Endothelial cell of umbilical vein (primary cell): ENCODE measurements at regions of chr2 and their contacts with region 1.

Region 1: GRCh38 chr2:197515739-197516392 is at the start of gene MOB4:
- DNase-seq: peak; percentile 97
- H3K4me3 ChIP-seq: peak within 1 kb of the TSS; percentile 38 to 81 (median 71)
- H3K27ac ChIP-seq: peak within 1 kb of the TSS; percentile 78
- H3K4me1 ChIP-seq: peaks cover 17% of the 10 kb centered on the region
- H3K27me3 ChIP-seq: no peaks in the 10 kb centered on the region
- CTCF ChIP-seq: no peak
- POLR2A ChIP-seq: peak; percentile 94
- total RNA-seq, gene MOB4: 24.0 and 27.9 TPM in 2 replicates

Region 2: GRCh38 chr2:197453161-197453914 is 62.5 kb before region 1 on chr2 and contains the start of gene COQ10B:
- CTCF ChIA-PET with region 1: no interaction called
- POLR2A ChIA-PET with region 1: interaction called, 4 read pairs
- dilution Hi-C with region 1: no loop called
- intact Hi-C with region 1: loop called (anchors 1 kb)
- DNase-seq: peak; percentile 100
- H3K4me3 ChIP-seq: peak within 1 kb of the TSS; percentile 61 to 95 (median 75)
- H3K27ac ChIP-seq: peak within 1 kb of the TSS; percentile 98
- H3K4me1 ChIP-seq: peaks cover 14% of the 10 kb centered on the region
- H3K27me3 ChIP-seq: no peaks in the 10 kb centered on the region
- CTCF ChIP-seq: peak in 1 of 2 donors; percentile 30
- POLR2A ChIP-seq: peak; percentile 94
- total RNA-seq, gene COQ10B: 15.1 and 19.5 TPM in 2 replicates

Region 3: GRCh38 chr2:197576631-197577030 is 60.8 kb after region 1 on chr2:
- CTCF ChIA-PET with region 1: no interaction called
- POLR2A ChIA-PET with region 1: no interaction called
- dilution Hi-C with region 1: no loop called
- intact Hi-C with region 1: loop called (anchors 1 kb)
- DNase-seq: peak; percentile 6
- H3K4me3 ChIP-seq: no peak overlapping the region
- H3K27ac ChIP-seq: no peak overlapping the region
- H3K4me1 ChIP-seq: no peaks in the 10 kb centered on the region
- H3K27me3 ChIP-seq: no peaks in the 10 kb centered on the region
- CTCF ChIP-seq: no peak
- POLR2A ChIP-seq: no peak

Region 4: GRCh38 chr2:197599285-197599965 is 83.6 kb after region 1 on chr2:
- CTCF ChIA-PET with region 1: interaction called, 10 read pairs
- POLR2A ChIA-PET with region 1: no interaction called
- dilution Hi-C with region 1: no loop called
- intact Hi-C with region 1: no loop called
- DNase-seq: peak; percentile 9
- H3K4me3 ChIP-seq: no peak overlapping the region
- H3K27ac ChIP-seq: no peak overlapping the region
- H3K4me1 ChIP-seq: no peaks in the 10 kb centered on the region
- H3K27me3 ChIP-seq: no peaks in the 10 kb centered on the region
- CTCF ChIP-seq: peak in 1 of 2 donors; percentile 12
- POLR2A ChIP-seq: no peak

Region 5: GRCh38 chr2:197675711-197676188 is 159.9 kb after region 1 on chr2:
- CTCF ChIA-PET with region 1: no interaction called
- POLR2A ChIA-PET with region 1: no interaction called
- dilution Hi-C with region 1: no loop called
- intact Hi-C with region 1: loop called (anchors 1 kb)
- DNase-seq: peak; percentile 88
- H3K4me3 ChIP-seq: peak overlapping the region; percentile 57 to 99 (median 98)
- H3K27ac ChIP-seq: peak overlapping the region; percentile 78
- H3K4me1 ChIP-seq: peaks cover 28% of the 10 kb centered on the region
- H3K27me3 ChIP-seq: no peaks in the 10 kb centered on the region
- CTCF ChIP-seq: no peak
- POLR2A ChIP-seq: peak; percentile 35